CD4-positive, alpha-beta T cell (primary cell): ENCODE measurements at regions of chr5 and their contacts with region 1.

Region 1: DNA sequence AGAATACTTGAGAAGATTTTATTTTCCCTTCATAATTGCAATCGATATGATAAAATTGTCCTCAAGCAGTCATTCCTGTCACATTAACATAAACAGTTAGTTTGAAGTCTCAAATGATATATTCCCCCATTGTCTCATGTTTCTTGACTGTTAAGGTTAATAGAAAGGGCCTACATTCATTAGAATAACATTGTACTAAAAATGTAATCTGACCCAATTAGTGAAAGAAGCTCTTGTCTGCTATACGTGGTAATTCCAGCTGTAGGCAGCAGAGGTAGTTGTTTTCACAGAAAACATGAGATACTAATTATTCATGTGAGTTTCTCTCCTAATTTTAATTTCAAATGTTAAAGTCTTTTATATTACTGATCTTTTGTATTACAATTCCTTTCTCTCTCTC is 25.9 kb upstream of the AP3B1 start:
- DNase-seq: peak in 4 of 14 experiments; percentile 7 to 40 (median 34)
- ATAC-seq: no peak
- H3K4me3 ChIP-seq: no peak overlapping the region
- H3K4me3 Mint-ChIP-seq: no peak overlapping the region
- H3K27ac ChIP-seq: no peak overlapping the region
- H3K27ac Mint-ChIP-seq: no peak overlapping the region
- H3K4me1 ChIP-seq: no peaks in the 10 kb centered on the region
- H3K4me1 Mint-ChIP-seq: no peaks in the 10 kb centered on the region
- H3K27me3 ChIP-seq: no peaks in the 10 kb centered on the region
- H3K27me3 Mint-ChIP-seq: peaks cover 3% of the 10 kb centered on the region
- CTCF ChIP-seq: peak; percentile 54

Region 2: GRCh38 chr5:78483809-78484521 is 163.6 kb after region 1 on chr5:
- CTCF ChIA-PET with region 1: no interaction called
- POLR2A ChIA-PET with region 1: no interaction called
- intact Hi-C with region 1: loop called in 1 of 2 experiments (anchors 10 kb)
- DNase-seq: peak in 3 of 14 experiments; percentile 11 to 46 (median 34)
- ATAC-seq: no peak
- H3K4me3 ChIP-seq: no peak overlapping the region
- H3K4me3 Mint-ChIP-seq: no peak overlapping the region
- H3K27ac ChIP-seq: no peak overlapping the region
- H3K27ac Mint-ChIP-seq: no peak overlapping the region
- H3K4me1 ChIP-seq: peaks cover 3% of the 10 kb centered on the region
- H3K4me1 Mint-ChIP-seq: peaks cover 15% of the 10 kb centered on the region
- H3K27me3 ChIP-seq: no peaks in the 10 kb centered on the region
- H3K27me3 Mint-ChIP-seq: no peaks in the 10 kb centered on the region
- CTCF ChIP-seq: no peak

Region 3: DNA sequence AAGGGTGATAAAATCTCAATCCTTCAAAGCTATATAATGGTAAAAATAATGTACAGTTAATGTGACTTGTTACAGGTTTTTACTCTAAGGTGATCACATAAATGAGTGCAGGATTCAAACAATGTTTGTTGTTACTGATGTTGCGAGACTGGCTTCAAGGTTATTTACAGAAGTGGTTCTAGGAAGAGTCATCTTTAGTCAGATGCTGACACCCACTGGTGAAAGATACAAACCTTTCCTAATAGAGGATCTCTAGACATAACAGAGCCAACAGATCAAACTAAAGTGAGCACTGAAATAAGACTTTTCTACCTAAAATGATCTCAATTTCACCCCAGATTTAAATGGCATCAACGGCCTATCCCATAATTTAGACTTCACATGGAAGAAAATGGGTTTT is 644.5 kb after region 1 on chr5:
- CTCF ChIA-PET with region 1: no interaction called
- POLR2A ChIA-PET with region 1: no interaction called
- intact Hi-C with region 1: loop called in 1 of 2 experiments (anchors 5 kb)
- DNase-seq: peak in 2 of 14 experiments; percentile 18 to 22
- ATAC-seq: no peak
- H3K4me3 ChIP-seq: no peak overlapping the region
- H3K4me3 Mint-ChIP-seq: no peak overlapping the region
- H3K27ac ChIP-seq: no peak overlapping the region
- H3K27ac Mint-ChIP-seq: no peak overlapping the region
- H3K4me1 ChIP-seq: no peaks in the 10 kb centered on the region
- H3K4me1 Mint-ChIP-seq: no peaks in the 10 kb centered on the region
- H3K27me3 ChIP-seq: no peaks in the 10 kb centered on the region
- H3K27me3 Mint-ChIP-seq: no peaks in the 10 kb centered on the region
- CTCF ChIP-seq: no peak